ENCODE measurements at regions of chr14 and their contacts with region 1.

Region 1: DNA sequence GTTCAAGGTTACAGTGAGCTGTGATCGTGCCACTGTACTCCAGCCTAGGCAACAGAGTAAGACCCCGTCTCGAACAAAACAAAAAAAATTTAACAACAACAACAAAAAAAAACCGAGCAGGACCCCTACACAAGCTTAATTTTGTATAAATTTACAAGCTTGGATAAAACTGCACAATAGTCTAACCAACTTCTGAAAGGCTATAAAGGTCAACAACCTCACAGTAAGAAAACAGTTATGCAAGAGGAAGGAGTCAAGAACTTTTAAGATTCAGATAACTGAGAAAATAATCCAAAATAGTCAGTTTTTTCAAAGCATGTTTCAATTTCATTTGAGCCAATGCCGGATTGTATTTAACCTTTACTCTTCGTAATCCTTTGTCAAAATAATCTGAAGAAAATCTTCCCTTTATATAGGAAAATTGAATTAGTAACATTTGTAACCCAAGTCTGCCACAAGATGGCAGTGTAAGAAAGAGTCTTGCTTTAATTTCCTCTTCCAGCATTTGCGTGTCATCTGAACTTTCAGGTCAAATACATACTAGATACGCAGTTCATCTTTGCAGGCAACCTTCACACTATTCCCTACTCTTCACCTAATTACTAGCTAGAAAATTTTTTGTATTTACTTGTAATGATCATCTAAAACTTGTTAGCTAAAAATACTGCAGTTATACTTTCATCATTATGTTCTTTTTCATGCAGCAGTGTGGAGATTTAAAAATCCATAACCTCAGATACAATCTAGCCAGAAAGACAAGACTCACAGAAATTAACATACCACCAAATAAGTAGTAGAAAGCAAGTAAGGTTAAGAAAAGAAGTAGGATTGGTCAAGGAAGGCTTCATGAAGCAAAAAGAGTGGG is 5.8 kb downstream of the CCNB1IP1 start:
- DNase-seq: peak; percentile 35
- ATAC-seq: peak; percentile 62
- H3K4me3 ChIP-seq: peak overlapping the region; percentile 50; the same call in 1 of the 2 replicates
- H3K27ac ChIP-seq: no peak overlapping the region
- H3K4me1 ChIP-seq: no peaks in the 10 kb centered on the region
- H3K27me3 ChIP-seq: no peaks in the 10 kb centered on the region
- CTCF ChIP-seq: peak; percentile 51 to 81 (median 62); a peak in 5 of 6 replicates
- EP300 ChIP-seq: no peak
- POLR2A ChIP-seq: no peak
- RAD21 ChIP-seq: peak; percentile 80

Region 2: GRCh38 chr14:20343092-20343861 is 16.0 kb after region 1 on chr14 and contains the start of gene PARP2:
- CTCF ChIA-PET with region 1: interaction called, 62 read pairs
- POLR2A ChIA-PET with region 1: interaction called, 96 read pairs
- RAD21 ChIA-PET with region 1: interaction called, 55 read pairs
- SMC1A ChIA-PET with region 1: interaction called, 65 read pairs
- in situ Hi-C with region 1: no loop called
- intact Hi-C with region 1: no loop called
- DNase-seq: peak; percentile 99
- ATAC-seq: peak; percentile 96
- H3K4me3 ChIP-seq: peak within 1 kb of the TSS; percentile 81
- H3K27ac ChIP-seq: peak within 1 kb of the TSS; percentile 89
- H3K4me1 ChIP-seq: no peaks in the 10 kb centered on the region
- H3K27me3 ChIP-seq: no peaks in the 10 kb centered on the region
- CTCF ChIP-seq: no peak
- EP300 ChIP-seq: no peak
- POLR2A ChIP-seq: peak; percentile 97
- RAD21 ChIP-seq: no peak
- polyA plus RNA-seq, gene PARP2: 30.4 to 38.0 TPM

Region 3: DNA sequence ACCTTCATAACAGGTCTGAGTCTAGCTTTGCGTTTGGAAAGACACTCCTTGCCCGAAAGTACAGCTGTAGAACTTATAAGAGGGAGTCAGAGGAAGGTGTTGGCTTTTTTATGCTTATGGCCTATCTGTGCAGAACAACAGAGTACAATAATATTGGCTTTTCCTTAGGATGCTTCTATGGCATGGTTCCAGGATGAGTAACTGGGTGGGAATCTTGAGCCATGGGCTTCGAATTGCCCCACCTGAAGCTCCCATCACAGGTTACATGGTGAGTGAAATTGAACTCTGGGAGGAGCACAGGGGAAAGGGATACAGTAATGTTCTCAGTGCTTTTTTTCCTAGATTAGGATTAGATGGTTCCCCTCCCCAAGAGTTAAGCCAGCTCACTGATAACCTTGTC is 29.2 kb after region 1 on chr14:
- CTCF ChIA-PET with region 1: interaction called, 20 read pairs
- POLR2A ChIA-PET with region 1: no interaction called
- RAD21 ChIA-PET with region 1: interaction called, 3 read pairs
- SMC1A ChIA-PET with region 1: interaction called, 17 read pairs
- in situ Hi-C with region 1: no loop called
- intact Hi-C with region 1: no loop called
- DNase-seq: no peak
- ATAC-seq: no peak
- H3K4me3 ChIP-seq: no peak overlapping the region
- H3K27ac ChIP-seq: no peak overlapping the region
- H3K4me1 ChIP-seq: no peaks in the 10 kb centered on the region
- H3K27me3 ChIP-seq: no peaks in the 10 kb centered on the region
- CTCF ChIP-seq: no peak
- EP300 ChIP-seq: no peak
- POLR2A ChIP-seq: no peak
- RAD21 ChIP-seq: no peak

Region 4: DNA sequence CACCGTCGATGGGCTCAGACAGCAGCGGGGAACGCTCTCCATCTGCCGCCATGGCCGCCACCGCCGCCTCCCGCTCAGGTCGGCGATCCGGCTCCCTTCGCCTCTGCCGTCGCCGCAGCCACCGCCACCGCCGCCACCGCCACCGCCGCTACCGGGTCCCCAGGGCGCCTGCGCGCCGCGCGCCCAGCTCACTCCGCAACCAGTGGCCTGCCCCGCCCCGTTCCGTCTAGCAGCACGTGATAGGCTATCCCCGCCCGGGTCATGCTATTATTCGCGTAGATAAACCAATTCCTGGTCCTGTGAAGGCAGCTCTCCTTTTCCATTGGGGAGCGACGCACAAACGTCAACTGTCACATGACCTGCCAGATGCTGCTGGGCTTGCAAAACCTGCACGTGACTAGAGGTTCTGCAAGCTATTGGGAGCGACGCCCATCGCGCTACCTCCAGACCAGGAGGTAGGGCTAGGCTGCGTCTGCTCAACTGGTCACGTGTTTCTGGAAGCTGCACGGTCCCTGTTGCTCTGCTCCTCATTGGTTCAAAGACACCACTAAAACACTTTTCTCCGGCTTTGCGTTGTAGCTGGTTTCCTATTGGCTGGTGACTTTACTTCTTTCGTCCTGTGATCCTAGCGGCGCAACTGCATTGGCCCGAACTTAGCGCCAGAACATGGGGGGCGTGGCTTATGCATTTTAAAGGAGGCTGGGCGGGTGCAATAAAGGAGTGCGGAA is 134.2 kb after region 1 on chr14 and contains the start of gene PIP4P1:
- CTCF ChIA-PET with region 1: interaction called, 13 read pairs
- POLR2A ChIA-PET with region 1: interaction called, 7 read pairs
- RAD21 ChIA-PET with region 1: interaction called, 9 read pairs
- SMC1A ChIA-PET with region 1: interaction called, 12 read pairs
- in situ Hi-C with region 1: no loop called
- intact Hi-C with region 1: loop called (anchors 2 kb)
- DNase-seq: peak; percentile 100
- ATAC-seq: peak; percentile 96
- H3K4me3 ChIP-seq: peak within 1 kb of the TSS; percentile 73
- H3K27ac ChIP-seq: peak within 1 kb of the TSS; percentile 87
- H3K4me1 ChIP-seq: peaks cover 6% of the 10 kb centered on the region
- H3K27me3 ChIP-seq: no peaks in the 10 kb centered on the region
- CTCF ChIP-seq: no peak
- EP300 ChIP-seq: no peak
- POLR2A ChIP-seq: peak; percentile 78
- RAD21 ChIP-seq: no peak
- polyA plus RNA-seq, gene PIP4P1: 19.1 to 41.6 TPM

Region 5: DNA sequence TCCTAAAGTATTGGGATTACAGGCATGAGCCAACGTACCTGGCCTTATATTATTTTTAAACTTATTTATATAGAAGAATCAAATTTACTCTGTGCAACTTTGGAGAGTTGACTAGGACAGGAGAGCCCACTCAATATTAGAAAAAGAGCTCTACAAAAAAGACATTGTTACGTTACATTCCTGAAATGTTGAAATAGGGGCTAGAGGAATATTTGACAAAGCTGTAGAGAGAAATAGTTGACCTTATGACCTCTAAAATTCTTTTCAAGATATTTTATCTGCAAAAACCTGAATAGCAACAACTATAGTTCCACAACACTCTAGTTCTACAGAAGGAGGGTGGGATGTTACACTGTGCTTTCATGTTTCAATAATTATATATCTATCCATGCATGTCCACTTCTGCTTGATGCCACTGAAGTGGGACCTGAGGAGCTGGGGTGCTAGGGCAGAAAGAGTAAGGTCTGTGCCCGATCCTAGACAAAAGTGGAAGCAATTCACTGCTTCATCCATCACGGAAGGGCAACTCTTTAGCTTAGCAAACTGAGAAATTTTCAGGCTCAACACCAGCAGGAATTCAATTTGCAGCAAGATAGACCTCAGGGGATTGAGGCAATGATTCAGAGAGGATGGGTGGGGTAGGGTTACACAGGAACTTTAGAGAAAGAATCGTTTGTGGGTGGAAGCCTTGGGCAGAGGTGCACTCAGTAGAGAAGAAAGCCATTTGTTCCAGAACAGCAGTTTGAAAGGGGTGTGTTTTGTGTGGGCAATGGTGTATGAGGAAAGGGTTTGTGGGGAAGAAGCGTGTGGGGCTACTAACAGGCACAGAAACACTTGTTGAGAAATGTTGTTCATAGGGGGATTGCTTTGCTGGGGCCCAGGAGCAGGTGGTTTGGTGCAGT is 162.1 kb after region 1 on chr14:
- CTCF ChIA-PET with region 1: interaction called, 10 read pairs
- POLR2A ChIA-PET with region 1: interaction called, 9 read pairs
- RAD21 ChIA-PET with region 1: interaction called, 21 read pairs
- SMC1A ChIA-PET with region 1: interaction called, 12 read pairs
- in situ Hi-C with region 1: no loop called
- intact Hi-C with region 1: no loop called
- DNase-seq: peak; percentile 72
- ATAC-seq: peak; percentile 36
- H3K4me3 ChIP-seq: peak overlapping the region; percentile 41
- H3K27ac ChIP-seq: peak overlapping the region; percentile 1; the same call in 1 of the 2 replicates
- H3K4me1 ChIP-seq: peaks cover 35% of the 10 kb centered on the region
- H3K27me3 ChIP-seq: no peaks in the 10 kb centered on the region
- CTCF ChIP-seq: no peak
- EP300 ChIP-seq: no peak
- POLR2A ChIP-seq: no peak
- RAD21 ChIP-seq: no peak

Region 6: DNA sequence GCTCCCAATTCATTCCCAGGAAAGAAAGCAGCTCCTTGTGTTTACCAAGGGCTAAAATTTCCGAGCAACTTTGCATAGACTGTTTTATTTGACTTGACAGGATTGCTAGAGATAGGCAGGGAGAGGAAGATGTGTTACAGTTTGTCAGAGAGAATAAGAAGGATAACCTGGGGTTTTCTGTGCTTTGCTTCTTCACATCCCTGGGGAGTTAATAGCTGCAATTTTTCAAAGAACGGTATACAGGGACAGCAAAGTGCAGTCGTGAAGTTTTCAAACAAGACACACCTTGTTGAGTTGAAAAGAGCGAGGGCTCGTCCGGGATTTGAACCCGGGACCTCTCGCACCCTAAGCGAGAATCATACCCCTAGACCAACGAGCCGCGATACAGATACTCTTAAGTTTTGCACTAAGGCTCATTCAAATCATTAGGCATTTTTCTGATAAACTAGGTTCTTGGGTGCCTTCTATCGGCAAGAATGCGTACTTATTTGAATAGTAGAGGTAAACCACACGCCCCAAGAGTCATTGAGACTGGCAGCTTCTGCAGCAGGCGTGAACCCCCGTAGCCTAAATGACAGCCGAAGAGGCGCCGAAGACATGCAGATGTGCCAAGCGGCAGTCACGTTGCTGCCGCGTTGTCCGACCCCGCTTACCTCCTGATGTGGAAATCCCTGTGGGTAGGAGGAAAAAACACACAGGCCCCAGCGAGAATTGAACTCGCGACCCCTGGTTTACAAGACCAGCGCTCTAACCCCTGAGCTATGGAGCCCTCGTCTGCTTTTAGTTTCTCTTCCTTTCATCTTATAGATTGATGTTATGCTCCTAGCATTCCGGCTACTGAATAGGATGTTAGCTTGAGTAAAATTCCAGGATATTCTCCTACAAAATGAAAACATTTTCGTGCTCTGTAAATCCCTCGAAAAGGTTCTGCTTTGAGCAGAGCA is 286.1 kb after region 1 on chr14:
- CTCF ChIA-PET with region 1: interaction called, 216 read pairs
- POLR2A ChIA-PET with region 1: interaction called, 3 read pairs
- RAD21 ChIA-PET with region 1: interaction called, 77 read pairs
- SMC1A ChIA-PET with region 1: interaction called, 110 read pairs
- in situ Hi-C with region 1: loop called (anchors 5 kb)
- intact Hi-C with region 1: loop called (anchors 1 kb)
- DNase-seq: peak; percentile 98
- ATAC-seq: peak; percentile 76
- H3K4me3 ChIP-seq: peak overlapping the region; percentile 89
- H3K27ac ChIP-seq: peak overlapping the region; percentile 54; the same call in 1 of the 2 replicates
- H3K4me1 ChIP-seq: peaks cover 42% of the 10 kb centered on the region
- H3K27me3 ChIP-seq: no peaks in the 10 kb centered on the region
- CTCF ChIP-seq: peak; percentile 49 to 62 (median 56); a peak in 5 of 6 replicates
- EP300 ChIP-seq: no peak; a peak in 1 of 4 replicates
- POLR2A ChIP-seq: no peak
- RAD21 ChIP-seq: 0 out of 2 replicates have a peak, but pooled peaks have one; percentile 7

Region 7: DNA sequence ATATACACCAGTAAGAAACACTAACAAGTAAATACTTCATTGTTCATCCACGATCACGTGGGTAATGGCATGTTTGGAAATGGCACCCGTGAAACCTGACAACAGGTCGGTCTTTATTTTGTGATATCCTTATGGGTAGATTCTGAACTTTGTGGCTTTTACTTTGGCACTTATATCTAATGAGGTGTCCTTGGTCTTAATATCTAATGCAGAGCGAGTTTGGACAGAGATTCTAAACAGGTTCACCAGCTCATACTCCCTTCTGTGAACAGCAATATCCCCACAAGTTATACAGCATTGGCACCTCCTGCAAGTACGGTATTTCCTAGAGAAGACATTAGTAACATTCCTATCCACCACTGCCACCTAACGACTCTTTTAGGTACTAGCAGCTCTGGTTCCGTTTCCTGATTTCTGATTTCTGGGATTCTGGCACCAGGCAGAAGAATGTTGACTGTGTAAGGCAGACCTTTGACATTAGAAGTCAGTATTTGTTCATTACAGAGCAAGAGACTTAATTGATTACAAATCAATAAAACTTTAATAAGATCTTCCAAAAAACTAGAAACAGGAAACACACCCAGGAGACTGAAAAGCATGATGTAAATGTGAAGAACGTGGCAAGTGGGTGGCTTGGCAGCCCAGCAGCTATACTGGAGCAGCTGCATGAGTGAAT is 363.7 kb after region 1 on chr14:
- CTCF ChIA-PET with region 1: interaction called, 24 read pairs
- POLR2A ChIA-PET with region 1: no interaction called
- RAD21 ChIA-PET with region 1: interaction called, 13 read pairs
- SMC1A ChIA-PET with region 1: interaction called, 20 read pairs
- in situ Hi-C with region 1: no loop called
- intact Hi-C with region 1: no loop called
- DNase-seq: peak; percentile 44
- ATAC-seq: peak; percentile 95
- H3K4me3 ChIP-seq: no peak overlapping the region
- H3K27ac ChIP-seq: no peak overlapping the region
- H3K4me1 ChIP-seq: no peaks in the 10 kb centered on the region
- H3K27me3 ChIP-seq: no peaks in the 10 kb centered on the region
- CTCF ChIP-seq: peak; percentile 80 to 94 (median 82)
- EP300 ChIP-seq: no peak
- POLR2A ChIP-seq: no peak
- RAD21 ChIP-seq: peak; percentile 94